ENCODE measurements at regions of chr21 and their contacts with region 1.

Region 1: DNA sequence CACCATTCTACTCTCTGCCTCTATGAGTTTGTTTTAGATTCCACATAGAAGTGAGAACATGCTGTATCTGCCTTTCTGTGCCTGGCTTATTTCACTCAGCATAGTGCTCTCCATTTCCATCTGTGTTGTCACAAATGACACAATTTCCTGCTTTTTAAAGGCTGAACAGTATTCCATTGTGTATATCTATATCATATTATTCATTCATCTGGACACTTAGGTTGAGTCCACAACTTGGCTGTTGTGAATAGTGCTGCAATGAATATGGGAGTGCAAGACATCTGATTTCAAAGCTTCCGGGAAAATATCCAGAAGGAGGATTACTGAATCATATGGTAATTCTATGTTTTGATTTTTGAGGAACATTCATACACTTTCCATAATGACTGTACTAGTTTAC is 20.1 kb upstream of the DONSON start:
- DNase-seq: no peak
- ATAC-seq: no peak
- H3K4me3 Mint-ChIP-seq: no peak overlapping the region
- H3K27ac Mint-ChIP-seq: peak overlapping the region; percentile 9
- H3K4me1 Mint-ChIP-seq: peaks cover 4% of the 10 kb centered on the region
- H3K27me3 Mint-ChIP-seq: no peaks in the 10 kb centered on the region
- CTCF ChIP-seq: no peak

Region 2: DNA sequence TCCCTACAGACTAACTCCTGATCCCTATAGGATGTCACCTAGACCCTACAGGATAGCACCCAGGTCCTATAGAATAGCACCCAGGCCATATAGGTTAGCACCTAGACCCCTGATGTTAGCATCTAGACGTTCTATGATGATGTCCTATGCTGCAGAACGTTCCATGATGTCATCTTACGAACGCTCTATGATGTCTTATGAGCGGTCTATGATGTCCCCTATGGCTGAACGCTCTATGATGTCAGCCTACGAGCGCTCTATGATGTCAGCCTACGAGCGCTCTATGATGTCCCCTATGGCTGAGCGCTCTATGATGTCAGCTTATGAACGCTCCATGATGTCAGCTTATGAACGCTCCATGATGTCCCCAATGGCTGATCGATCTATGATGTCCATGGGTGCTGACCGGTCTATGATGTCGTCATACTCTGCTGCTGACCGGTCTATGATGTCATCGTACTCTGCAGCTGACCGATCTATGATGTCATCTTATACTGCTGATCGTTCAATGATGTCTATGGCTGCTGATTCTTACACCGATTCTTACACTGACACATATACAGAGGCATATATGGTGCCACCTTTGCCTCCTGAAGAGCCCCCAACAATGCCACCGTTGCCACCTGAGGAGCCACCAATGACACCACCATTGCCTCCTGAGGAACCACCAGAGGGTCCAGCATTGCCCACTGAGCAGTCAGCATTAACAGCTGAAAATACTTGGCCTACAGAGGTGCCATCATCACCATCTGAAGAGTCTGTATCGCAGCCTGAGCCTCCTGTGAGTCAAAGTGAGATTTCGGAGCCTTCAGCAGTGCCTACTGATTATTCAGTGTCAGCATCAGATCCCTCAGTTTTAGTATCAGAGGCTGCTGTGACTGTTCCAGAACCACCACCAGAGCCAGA is 56.2 kb before region 1 on chr21:
- CTCF ChIA-PET with region 1: interaction called, 17 read pairs
- POLR2A ChIA-PET with region 1: no interaction called
- intact Hi-C with region 1: no loop called
- DNase-seq: no peak
- ATAC-seq: peak; percentile 14
- H3K4me3 Mint-ChIP-seq: no peak overlapping the region
- H3K27ac Mint-ChIP-seq: peak overlapping the region; percentile 34
- H3K4me1 Mint-ChIP-seq: peaks cover 54% of the 10 kb centered on the region
- H3K27me3 Mint-ChIP-seq: no peaks in the 10 kb centered on the region
- CTCF ChIP-seq: no peak

Region 3: DNA sequence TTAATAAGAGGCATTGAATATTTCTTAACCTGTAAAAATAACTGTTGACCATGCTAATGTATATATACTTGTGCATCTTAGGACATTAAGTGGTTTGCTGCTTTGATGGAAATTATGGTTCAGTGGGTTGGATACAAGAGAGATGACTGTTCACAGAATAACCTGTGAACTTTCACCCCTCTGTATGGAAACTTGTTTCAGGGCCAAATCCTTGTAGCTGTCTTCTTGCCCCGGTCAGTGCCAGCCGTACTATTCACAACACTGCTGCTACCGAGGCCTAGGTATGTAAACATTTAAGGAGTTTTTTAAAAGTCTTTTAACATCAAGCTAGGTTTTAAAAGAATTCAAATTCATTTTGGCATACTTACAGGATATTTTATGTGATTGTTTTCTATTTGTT is 36.2 kb before region 1 on chr21:
- CTCF ChIA-PET with region 1: interaction called, 26 read pairs
- POLR2A ChIA-PET with region 1: no interaction called
- intact Hi-C with region 1: no loop called
- DNase-seq: no peak
- ATAC-seq: no peak
- H3K4me3 Mint-ChIP-seq: no peak overlapping the region
- H3K27ac Mint-ChIP-seq: peak overlapping the region; percentile 58
- H3K4me1 Mint-ChIP-seq: peaks cover 22% of the 10 kb centered on the region
- H3K27me3 Mint-ChIP-seq: no peaks in the 10 kb centered on the region
- CTCF ChIP-seq: no peak

Region 4: DNA sequence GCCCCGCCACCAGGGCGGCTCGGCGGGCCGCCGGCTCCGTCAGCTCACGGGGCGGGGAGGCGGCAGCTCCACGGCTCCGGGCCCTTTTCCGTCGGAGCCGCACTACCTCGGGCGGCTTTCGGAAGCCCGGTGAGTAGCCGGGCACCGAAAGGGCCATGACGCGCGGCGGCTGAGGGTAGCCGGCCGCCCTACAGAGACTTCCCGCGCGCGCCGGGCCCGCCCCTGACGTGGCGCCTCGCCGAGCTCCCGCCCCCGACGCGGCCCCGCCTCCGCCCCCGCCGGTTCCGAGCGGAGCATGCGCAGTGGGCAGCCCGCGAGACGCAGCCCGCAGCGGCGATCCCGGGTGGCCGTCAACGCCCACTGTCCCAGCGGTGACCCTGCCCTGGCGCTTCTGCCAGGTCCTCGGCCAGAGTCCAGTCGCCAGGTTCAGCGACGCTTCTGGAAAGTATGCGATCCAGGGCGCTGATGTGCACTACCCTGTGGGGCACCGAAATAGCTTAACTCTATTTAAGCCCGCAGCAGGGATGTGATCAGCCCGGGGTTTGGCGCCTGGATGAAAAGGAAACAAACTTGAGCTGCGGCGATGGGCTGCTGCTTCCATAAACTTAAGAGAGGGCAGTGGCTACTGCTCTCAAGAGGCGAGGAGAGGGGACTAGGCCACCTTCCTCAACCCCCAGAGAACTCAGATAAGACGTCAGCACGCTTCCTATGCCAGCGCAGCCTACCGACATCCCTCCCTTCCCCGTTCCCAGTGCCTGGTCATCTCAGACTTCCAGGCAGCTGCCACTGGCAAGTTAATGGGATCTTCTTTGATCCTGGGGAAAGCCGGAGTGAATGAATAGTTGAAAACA is 19.8 kb before region 1 on chr21 and contains the start of gene DONSON:
- CTCF ChIA-PET with region 1: interaction called, 38 read pairs
- POLR2A ChIA-PET with region 1: interaction called, 3 read pairs
- intact Hi-C with region 1: no loop called
- DNase-seq: peak; percentile 83
- ATAC-seq: peak; percentile 94
- H3K4me3 Mint-ChIP-seq: peak within 1 kb of the TSS; percentile 93
- H3K27ac Mint-ChIP-seq: peak within 1 kb of the TSS; percentile 86
- H3K4me1 Mint-ChIP-seq: peaks cover 15% of the 10 kb centered on the region
- H3K27me3 Mint-ChIP-seq: no peaks in the 10 kb centered on the region
- CTCF ChIP-seq: no peak
- total RNA-seq, gene DONSON: 36.8 to 41.5 TPM

Region 5: DNA sequence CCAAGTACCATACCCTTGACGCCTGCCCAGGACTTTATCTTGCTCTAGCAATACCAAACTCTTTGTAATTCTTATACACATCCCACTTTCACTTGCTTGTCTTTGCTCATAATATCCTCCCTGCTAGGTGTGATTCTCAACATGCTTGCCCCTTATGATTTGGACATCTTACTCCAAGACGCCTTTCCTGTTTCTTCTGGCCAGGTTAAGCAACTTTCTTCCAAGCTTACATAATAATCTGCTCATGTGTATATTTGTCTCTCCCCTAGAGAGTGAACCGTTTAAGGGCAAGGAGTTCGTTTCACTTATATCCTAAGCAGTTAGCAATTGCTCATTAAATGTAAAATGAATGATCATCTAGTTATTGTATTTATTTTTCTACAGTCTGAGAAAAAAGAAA is 11.2 kb after region 1 on chr21:
- CTCF ChIA-PET with region 1: interaction called, 21 read pairs
- POLR2A ChIA-PET with region 1: interaction called, 3 read pairs
- intact Hi-C with region 1: no loop called
- DNase-seq: no peak
- ATAC-seq: no peak
- H3K4me3 Mint-ChIP-seq: no peak overlapping the region
- H3K27ac Mint-ChIP-seq: no peak overlapping the region
- H3K4me1 Mint-ChIP-seq: no peaks in the 10 kb centered on the region
- H3K27me3 Mint-ChIP-seq: no peaks in the 10 kb centered on the region
- CTCF ChIP-seq: no peak

Measured in activated CD8-positive, alpha-beta T cell treated with anti-CD3 and anti-CD28 coated beads for 36 hours (primary cell).